ENCODE measurements at regions of chr4 and their contacts with region 1.

Region 1: GRCh38 chr4:42519803-42520417 is 122.6 kb downstream of the SHISA3 start:
- DNase-seq: no peak
- ATAC-seq: no peak

Region 2: GRCh38 chr4:42371306-42372252 is 148.3 kb before region 1 on chr4:
- intact Hi-C with region 1: loop called (anchors 2 kb)
- DNase-seq: no peak
- ATAC-seq: peak; percentile 10

Region 3: GRCh38 chr4:42995343-42995944 is 475.5 kb after region 1 on chr4:
- intact Hi-C with region 1: no loop called
- DNase-seq: no peak
- ATAC-seq: no peak

Measured in Right ventricle myocardium inferior (tissue), 1 donor.